Activated CD4-positive, alpha-beta T cell treated with anti-CD3 and anti-CD28 coated beads, Interleukin-2, amount 10 ng/mL, durations not matched to agents 24 days and 14 days (primary cell): ENCODE measurements at regions of chr19 and their contacts with region 1.

Region 1: GRCh38 chr19:38374429-38375176 is at the start of gene PSMD8:
- DNase-seq: peak; percentile 100
- H3K4me3 Mint-ChIP-seq: peak within 1 kb of the TSS; percentile 100
- H3K27ac Mint-ChIP-seq: peak within 1 kb of the TSS; percentile 98
- H3K4me1 Mint-ChIP-seq: peaks cover 21% of the 10 kb centered on the region
- H3K27me3 Mint-ChIP-seq: no peaks in the 10 kb centered on the region
- total RNA-seq, gene PSMD8: 314 and 315 TPM in 2 replicates

Region 2: GRCh38 chr19:38361633-38362075 is 12.9 kb before region 1 on chr19:
- intact Hi-C with region 1: loop called (anchors 1 kb)
- DNase-seq: peak; percentile 93
- H3K4me3 Mint-ChIP-seq: peak overlapping the region; percentile 92
- H3K27ac Mint-ChIP-seq: peak overlapping the region; percentile 67
- H3K4me1 Mint-ChIP-seq: peaks cover 10% of the 10 kb centered on the region
- H3K27me3 Mint-ChIP-seq: peaks cover 31% of the 10 kb centered on the region

Region 3: GRCh38 chr19:38387550-38388348 is 13.1 kb after region 1 on chr19 and contains the start of gene GGN:
- intact Hi-C with region 1: loop called (anchors 1 kb)
- DNase-seq: peak; percentile 94
- H3K4me3 Mint-ChIP-seq: peak within 1 kb of the TSS; percentile 90
- H3K27ac Mint-ChIP-seq: peak within 1 kb of the TSS; percentile 72
- H3K4me1 Mint-ChIP-seq: peaks cover 17% of the 10 kb centered on the region
- H3K27me3 Mint-ChIP-seq: peaks cover 23% of the 10 kb centered on the region
- total RNA-seq, gene GGN: 0.47 and 1.0 TPM in 2 replicates

Region 4: GRCh38 chr19:38433268-38433733 is 58.7 kb after region 1 on chr19 and contains the start of gene RYR1:
- intact Hi-C with region 1: no loop called
- DNase-seq: peak; percentile 87
- H3K4me3 Mint-ChIP-seq: peak within 1 kb of the TSS; percentile 53
- H3K27ac Mint-ChIP-seq: peak within 1 kb of the TSS; percentile 74
- H3K4me1 Mint-ChIP-seq: peaks cover 21% of the 10 kb centered on the region
- H3K27me3 Mint-ChIP-seq: peaks cover 15% of the 10 kb centered on the region
- total RNA-seq, gene RYR1: 3.6 and 4.0 TPM in 2 replicates